Heart left ventricle (tissue), 16 donors: ENCODE measurements at regions of chr9 and their contacts with region 1.

Region 1: DNA sequence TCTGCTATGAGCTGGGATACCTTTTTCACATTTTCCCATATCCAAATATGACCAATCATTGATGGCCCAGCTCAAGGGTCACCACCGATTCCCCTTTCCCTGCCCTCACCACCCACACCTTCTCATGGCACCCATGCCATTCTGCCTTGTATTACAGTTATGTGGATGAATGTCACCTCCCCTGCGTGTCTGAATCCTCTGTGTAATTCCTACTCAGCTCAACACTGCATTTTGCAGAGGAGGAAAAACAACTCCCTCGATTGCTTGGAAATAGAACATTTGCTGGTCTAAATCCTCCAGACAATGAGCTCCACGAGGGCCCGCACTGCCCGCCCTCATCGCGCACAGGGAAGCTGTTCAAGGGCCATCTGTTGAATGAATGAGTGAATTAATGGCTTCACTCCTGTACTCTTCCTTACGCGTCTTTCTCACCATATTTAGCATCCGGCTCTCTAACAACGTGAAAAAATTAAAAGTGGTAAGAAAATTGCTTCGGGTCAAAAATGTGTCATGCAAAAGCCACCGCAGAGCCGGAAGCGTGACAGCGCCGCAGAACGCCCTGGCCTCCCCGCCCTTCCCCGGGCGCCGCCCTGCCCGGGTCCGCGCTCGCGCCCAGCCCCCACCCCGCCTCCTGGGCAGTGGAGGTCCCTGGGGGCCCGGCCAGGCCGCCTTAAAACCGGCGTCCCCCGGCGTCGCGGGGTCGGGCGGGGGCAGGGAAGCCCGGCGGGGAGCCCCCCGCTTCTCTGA is 706 bp downstream of the SUSD1 start:
- DNase-seq: peak; percentile 59 to 90 (median 73)
- ATAC-seq: peak in 3 of 4 donors; percentile 82 to 92 (median 90)
- H3K4me3 ChIP-seq: peak overlapping the region; percentile 36 to 93 (median 68)
- H3K27ac ChIP-seq: peak overlapping the region in 11 of 12 donors; percentile 22 to 88 (median 60)
- H3K4me1 ChIP-seq: peaks cover 0 to 57% (median 6%) of the 10 kb centered on the region in 12 donors
- H3K27me3 ChIP-seq: no peaks in the 10 kb centered on the region
- CTCF ChIP-seq: no peak
- POLR2A ChIP-seq: no peak

Region 2: GRCh38 chr9:112194969-112195431 is 20.6 kb after region 1 on chr9:
- intact Hi-C with region 1: no loop called
- DNase-seq: peak in 1 of 5 donors; percentile 23
- ATAC-seq: peak; percentile 49 to 60 (median 56)
- H3K4me3 ChIP-seq: no peak overlapping the region
- H3K27ac ChIP-seq: peak overlapping the region; percentile 26 to 85 (median 72)
- H3K4me1 ChIP-seq: peaks cover 0 to 21% (median 5%) of the 10 kb centered on the region in 12 donors
- H3K27me3 ChIP-seq: no peaks in the 10 kb centered on the region
- CTCF ChIP-seq: no peak
- POLR2A ChIP-seq: no peak

Region 3: DNA sequence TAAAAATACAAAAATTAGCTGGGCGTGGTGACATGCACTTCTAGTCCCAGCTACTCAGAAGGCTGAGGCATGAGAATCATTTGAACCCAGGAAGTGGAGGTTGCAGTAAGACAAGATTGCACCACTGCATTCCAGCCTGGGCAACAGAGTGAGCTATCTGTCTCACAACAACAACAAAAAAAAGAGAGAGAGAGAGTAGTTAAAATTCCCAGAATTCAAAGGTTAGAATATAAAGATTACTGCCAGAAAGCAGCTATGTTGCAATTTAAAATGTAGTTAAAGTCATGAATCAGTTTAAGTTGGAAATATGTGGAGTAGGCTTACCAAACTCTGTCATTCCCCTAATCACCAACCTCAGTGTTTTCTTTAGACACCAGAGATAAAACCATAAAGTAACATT is 59.4 kb after region 1 on chr9:
- intact Hi-C with region 1: loop called in 1 of 10 experiments (anchors 10 kb)
- DNase-seq: no peak
- ATAC-seq: no peak
- H3K4me3 ChIP-seq: no peak overlapping the region
- H3K27ac ChIP-seq: no peak overlapping the region
- H3K4me1 ChIP-seq: peaks cover 0 to 5% (median 0%) of the 10 kb centered on the region in 12 donors
- H3K27me3 ChIP-seq: no peaks in the 10 kb centered on the region
- CTCF ChIP-seq: no peak
- POLR2A ChIP-seq: no peak

Region 4: DNA sequence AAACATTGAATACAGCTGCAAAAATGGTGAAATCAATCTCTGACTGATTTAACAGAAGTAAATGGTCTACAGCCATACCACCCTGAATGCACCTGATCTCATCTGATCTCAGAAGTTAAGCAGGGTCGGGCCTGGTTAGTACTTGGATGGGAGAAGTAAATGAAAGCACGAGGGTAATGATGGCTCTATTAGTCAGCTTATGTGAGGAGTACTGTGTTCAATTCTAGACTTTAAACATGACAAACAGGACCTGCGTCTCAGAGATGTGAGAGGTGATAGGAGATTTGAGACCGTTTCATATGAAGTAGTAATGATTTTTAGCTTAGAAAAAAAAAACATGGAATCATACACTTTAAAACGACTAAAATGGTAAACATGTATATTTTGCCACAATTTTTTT is 77.8 kb after region 1 on chr9:
- intact Hi-C with region 1: no loop called
- DNase-seq: no peak
- ATAC-seq: no peak
- H3K4me3 ChIP-seq: no peak overlapping the region
- H3K27ac ChIP-seq: no peak overlapping the region
- H3K4me1 ChIP-seq: peaks cover 0 to 8% (median 0%) of the 10 kb centered on the region in 12 donors
- H3K27me3 ChIP-seq: no peaks in the 10 kb centered on the region
- CTCF ChIP-seq: no peak
- POLR2A ChIP-seq: no peak

Region 5: GRCh38 chr9:112327718-112328464 is 153.5 kb after region 1 on chr9:
- intact Hi-C with region 1: loop called in 4 of 10 experiments (anchors 5 to 10 kb)
- DNase-seq: no peak
- ATAC-seq: no peak
- H3K4me3 ChIP-seq: no peak overlapping the region
- H3K27ac ChIP-seq: no peak overlapping the region
- H3K4me1 ChIP-seq: peaks cover 0 to 58% (median 14%) of the 10 kb centered on the region in 12 donors
- H3K27me3 ChIP-seq: no peaks in the 10 kb centered on the region
- CTCF ChIP-seq: no peak
- POLR2A ChIP-seq: no peak

Region 6: GRCh38 chr9:112333639-112334431 is 159.4 kb after region 1 on chr9:
- intact Hi-C with region 1: loop called in 4 of 10 experiments (anchors 5 to 10 kb)
- DNase-seq: peak; percentile 94 to 98 (median 96)
- ATAC-seq: peak; percentile 93 to 97 (median 96)
- H3K4me3 ChIP-seq: peak overlapping the region; percentile 71 to 100 (median 86)
- H3K27ac ChIP-seq: peak overlapping the region; percentile 92 to 100 (median 98)
- H3K4me1 ChIP-seq: peaks cover 0 to 39% (median 14%) of the 10 kb centered on the region in 12 donors
- H3K27me3 ChIP-seq: no peaks in the 10 kb centered on the region
- CTCF ChIP-seq: peak; percentile 28 to 73 (median 60)
- POLR2A ChIP-seq: no peak